Vagina (tissue), 2 donors: ENCODE measurements at regions of chr12 and their contacts with region 1.

Region 1: GRCh38 chr12:54959291-54960018 is 25.1 kb downstream of the TESPA1 start:
- DNase-seq: no peak
- H3K4me3 ChIP-seq: no peak overlapping the region
- H3K27ac ChIP-seq: no peak overlapping the region
- H3K4me1 ChIP-seq: no peaks in the 10 kb centered on the region
- H3K27me3 ChIP-seq: no peaks in the 10 kb centered on the region
- CTCF ChIP-seq: no peak
- POLR2A ChIP-seq: no peak

Region 2: DNA sequence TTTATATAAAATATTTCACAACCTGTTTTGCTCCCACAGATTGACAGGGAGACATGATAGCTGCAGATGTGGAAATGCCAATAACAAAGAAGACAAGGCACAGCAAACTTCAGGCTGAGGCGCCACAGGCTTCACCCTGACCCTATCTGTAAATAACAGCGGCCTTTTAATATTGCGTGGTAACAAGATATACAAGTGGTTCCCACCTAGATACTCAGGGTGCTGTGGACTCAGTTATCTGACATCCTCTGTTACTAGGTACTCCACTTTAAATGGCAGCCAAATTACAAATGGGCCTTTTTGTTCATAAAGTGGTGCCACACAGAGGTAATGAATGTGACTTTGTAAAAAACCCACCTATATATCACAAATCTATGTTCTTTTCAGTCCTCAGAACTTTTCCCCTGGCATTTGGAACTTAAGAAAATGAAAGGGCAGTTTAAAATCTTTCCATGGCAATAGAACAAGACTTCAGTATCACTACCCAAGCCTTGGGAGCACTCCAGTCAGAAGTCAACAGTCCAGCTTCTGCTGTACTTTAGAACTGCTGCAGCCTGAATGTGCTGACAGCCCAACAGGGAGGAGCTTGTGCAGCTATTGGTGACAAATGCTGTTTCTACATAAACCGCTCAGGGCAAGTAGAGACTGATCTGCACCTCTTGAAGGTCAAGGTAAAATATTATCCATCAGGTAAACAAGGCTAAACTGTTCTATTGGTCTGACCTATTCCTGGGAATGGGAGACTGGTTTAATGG is 225.1 kb before region 1 on chr12:
- intact Hi-C with region 1: no loop called
- DNase-seq: no peak
- H3K4me3 ChIP-seq: no peak overlapping the region
- H3K27ac ChIP-seq: no peak overlapping the region
- H3K4me1 ChIP-seq: no peaks in the 10 kb centered on the region
- H3K27me3 ChIP-seq: no peaks in the 10 kb centered on the region
- CTCF ChIP-seq: no peak
- POLR2A ChIP-seq: no peak

Region 3: GRCh38 chr12:54749191-54749818 is 210.2 kb before region 1 on chr12:
- intact Hi-C with region 1: loop called (anchors 5 kb)
- DNase-seq: no peak
- H3K4me3 ChIP-seq: no peak overlapping the region
- H3K27ac ChIP-seq: no peak overlapping the region
- H3K4me1 ChIP-seq: no peaks in the 10 kb centered on the region
- H3K27me3 ChIP-seq: no peaks in the 10 kb centered on the region
- CTCF ChIP-seq: peak; percentile 49 to 72 (median 60)
- POLR2A ChIP-seq: no peak